ENCODE measurements at regions of chrX and their contacts with region 1.

Region 1: DNA sequence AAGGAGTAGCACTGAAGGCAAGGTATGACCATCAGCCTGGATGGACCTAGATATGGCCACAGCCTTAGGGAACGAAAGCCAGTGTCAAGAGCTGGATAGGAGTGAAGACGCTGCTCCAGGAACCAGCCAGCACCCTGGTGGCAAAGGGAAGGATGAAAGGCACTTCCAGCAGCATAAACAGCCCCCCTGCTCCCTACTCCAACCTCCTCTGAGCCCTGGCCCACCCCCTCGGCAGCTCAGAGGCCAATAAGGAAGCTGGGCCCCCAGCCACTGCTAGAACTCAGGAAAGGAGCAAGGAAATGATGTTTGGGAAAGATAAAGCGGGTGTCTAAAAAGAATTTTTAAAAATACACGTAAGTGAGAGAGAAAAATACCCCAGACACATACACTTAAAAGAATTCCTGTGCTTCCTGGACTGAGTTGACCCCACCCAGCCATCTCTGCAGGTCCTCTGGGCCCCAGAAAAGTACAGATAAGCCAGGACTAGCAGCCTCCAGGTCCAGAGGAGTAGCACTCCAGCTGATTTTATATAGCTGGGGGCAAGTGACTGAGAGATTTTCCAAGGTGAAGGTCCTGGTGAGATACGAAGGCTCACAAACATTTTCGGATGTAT is 170.4 kb downstream of the SHROOM4 start:
- DNase-seq: peak; percentile 91
- H3K4me3 ChIP-seq: peak overlapping the region; percentile 11 to 82 (median 63)
- H3K27ac ChIP-seq: peak overlapping the region; percentile 92
- H3K4me1 ChIP-seq: peaks cover 73% of the 10 kb centered on the region
- H3K27me3 ChIP-seq: no peaks in the 10 kb centered on the region
- CTCF ChIP-seq: peak; percentile 5 to 29
- POLR2A ChIP-seq: peak; percentile 85

Region 2: GRCh38 chrX:50594788-50595187 is 48.8 kb before region 1 on chrX:
- CTCF ChIA-PET with region 1: no interaction called
- POLR2A ChIA-PET with region 1: interaction called, 3 read pairs
- dilution Hi-C with region 1: no loop called
- intact Hi-C with region 1: loop called (anchors 5 kb)
- DNase-seq: peak; percentile 74
- H3K4me3 ChIP-seq: no peak overlapping the region
- H3K27ac ChIP-seq: peak overlapping the region; percentile 93
- H3K4me1 ChIP-seq: peaks cover 25% of the 10 kb centered on the region
- H3K27me3 ChIP-seq: no peaks in the 10 kb centered on the region
- CTCF ChIP-seq: no peak
- POLR2A ChIP-seq: no peak

Region 3: DNA sequence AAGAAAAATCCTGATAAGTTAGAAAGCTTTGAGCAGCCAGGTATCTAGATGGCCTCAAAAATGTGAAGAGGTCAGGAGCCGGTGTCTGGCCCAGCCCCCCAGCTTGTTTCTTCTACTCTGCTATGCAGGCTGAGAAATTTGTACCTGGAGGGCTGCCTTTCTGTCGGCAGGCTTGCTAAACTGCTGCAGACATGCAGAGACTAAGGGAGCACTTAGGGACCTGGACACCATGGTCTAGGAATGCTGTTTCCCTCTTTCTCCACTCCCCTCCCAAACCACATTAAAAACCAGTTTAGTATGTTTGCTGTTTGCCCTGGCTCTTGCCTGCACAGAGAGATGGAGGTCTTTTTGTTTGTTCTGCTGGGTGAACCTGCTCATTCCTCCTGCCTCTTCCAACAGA is 15.9 kb before region 1 on chrX:
- CTCF ChIA-PET with region 1: interaction called, 3 read pairs
- POLR2A ChIA-PET with region 1: interaction called, 7 read pairs
- dilution Hi-C with region 1: no loop called
- intact Hi-C with region 1: loop called (anchors 2 kb)
- DNase-seq: no peak
- H3K4me3 ChIP-seq: no peak overlapping the region
- H3K27ac ChIP-seq: no peak overlapping the region
- H3K4me1 ChIP-seq: peaks cover 41% of the 10 kb centered on the region
- H3K27me3 ChIP-seq: no peaks in the 10 kb centered on the region
- CTCF ChIP-seq: no peak
- POLR2A ChIP-seq: no peak

Region 4: GRCh38 chrX:50707405-50707804 is 63.8 kb after region 1 on chrX:
- CTCF ChIA-PET with region 1: no interaction called
- POLR2A ChIA-PET with region 1: no interaction called
- dilution Hi-C with region 1: no loop called
- intact Hi-C with region 1: no loop called
- DNase-seq: peak; percentile 21
- H3K4me3 ChIP-seq: no peak overlapping the region
- H3K27ac ChIP-seq: no peak overlapping the region
- H3K4me1 ChIP-seq: peaks cover 16% of the 10 kb centered on the region
- H3K27me3 ChIP-seq: no peaks in the 10 kb centered on the region
- CTCF ChIP-seq: no peak
- POLR2A ChIP-seq: no peak

Region 5: DNA sequence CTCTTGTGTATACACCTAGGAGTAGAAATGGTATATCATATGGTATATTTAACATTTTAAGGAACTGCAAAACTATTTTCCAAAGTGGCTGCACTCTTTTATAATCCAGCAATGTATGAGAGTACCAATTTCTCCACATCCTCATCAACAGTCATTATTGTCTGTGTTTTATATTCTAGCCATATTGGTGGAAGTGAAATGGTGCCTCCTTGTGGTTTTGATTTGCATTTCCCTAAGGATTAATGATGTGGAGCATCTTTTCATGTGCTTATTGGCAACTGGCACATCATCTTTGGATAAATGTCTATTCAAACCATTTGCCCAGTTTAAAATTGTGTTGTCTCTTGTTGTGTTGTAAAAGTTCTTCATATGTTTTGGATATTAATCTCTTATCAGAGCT is 276.5 kb after region 1 on chrX:
- CTCF ChIA-PET with region 1: no interaction called
- POLR2A ChIA-PET with region 1: no interaction called
- dilution Hi-C with region 1: no loop called
- intact Hi-C with region 1: loop called (anchors 1 kb)
- DNase-seq: peak; percentile 46
- H3K4me3 ChIP-seq: no peak overlapping the region
- H3K27ac ChIP-seq: no peak overlapping the region
- H3K4me1 ChIP-seq: no peaks in the 10 kb centered on the region
- H3K27me3 ChIP-seq: no peaks in the 10 kb centered on the region
- CTCF ChIP-seq: peak in 1 of 2 donors; percentile 31
- POLR2A ChIP-seq: no peak

Measured in endothelial cell of umbilical vein (primary cell).